HCT116 (cell line): ENCODE measurements at regions of chr1 and their contacts with region 1.

Region 1: DNA sequence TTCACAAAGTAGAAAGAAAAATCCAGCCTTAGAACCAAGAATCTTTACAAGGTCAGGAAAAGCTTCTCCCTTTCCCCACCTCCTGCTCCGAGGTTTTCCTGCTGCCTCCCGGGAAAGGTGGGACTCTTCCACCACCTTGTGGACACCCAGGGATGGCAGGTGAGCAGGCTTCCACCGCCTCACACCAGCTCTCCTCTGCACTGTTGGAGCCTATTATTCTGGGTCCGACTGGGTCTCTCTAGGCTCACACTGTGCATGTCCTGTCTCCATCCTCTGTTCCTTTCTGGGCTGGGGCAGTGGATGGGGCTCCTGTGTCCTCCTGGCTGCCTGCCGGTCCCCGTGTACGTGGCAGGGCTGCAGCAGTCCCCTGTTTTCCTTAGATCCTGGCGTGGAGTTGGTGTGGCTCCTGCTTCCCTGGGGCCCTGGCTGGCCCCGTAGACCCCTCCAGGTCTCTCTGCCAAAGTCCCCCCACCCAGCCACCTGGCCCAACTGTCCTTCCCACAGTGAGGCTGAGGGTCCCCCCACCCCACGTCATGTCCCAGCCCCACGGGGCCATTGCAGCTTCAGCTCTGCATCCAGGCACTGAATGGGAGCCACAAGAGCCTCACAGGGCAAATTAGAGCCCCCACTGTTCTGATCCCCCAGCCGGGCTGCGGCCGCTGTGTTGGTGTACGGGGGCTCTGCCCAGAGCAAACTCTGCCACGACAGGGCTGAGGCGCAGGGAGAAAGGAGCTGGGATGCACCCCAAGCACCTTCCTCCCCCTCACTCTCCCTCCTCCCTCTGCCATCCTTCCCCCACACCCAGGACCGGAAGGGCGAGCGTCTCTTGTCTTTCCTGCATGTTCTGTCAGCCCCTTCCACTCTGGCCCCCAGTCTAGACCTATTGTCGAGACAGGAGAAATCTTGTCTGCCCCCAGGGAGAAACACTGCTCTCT is 3.3 kb upstream of the SLC45A1 start:
- DNase-seq: peak; percentile 48
- ATAC-seq: peak; percentile 75
- H3K4me3 ChIP-seq: no peak overlapping the region
- H3K27ac ChIP-seq: peak overlapping the region; percentile 50; the same call in 1 of the 2 replicates
- H3K4me1 ChIP-seq: peaks cover 29 to 60% of the 10 kb centered on the region in 2 experiments
- H3K27me3 ChIP-seq: no peaks in the 10 kb centered on the region
- CTCF ChIP-seq: peak in 2 of 3 experiments; percentile 92 to 94; a peak in 4 of 6 replicates
- POLR2A ChIP-seq: no peak
- RAD21 ChIP-seq: no peak

Region 2: GRCh38 chr1:7667625-7668218 is 646.9 kb before region 1 on chr1:
- CTCF ChIA-PET with region 1: interaction called, 14 read pairs
- POLR2A ChIA-PET with region 1: no interaction called
- RAD21 ChIA-PET with region 1: no interaction called
- intact Hi-C with region 1: no loop called
- DNase-seq: peak; percentile 42
- ATAC-seq: peak; percentile 81
- H3K4me3 ChIP-seq: no peak overlapping the region
- H3K27ac ChIP-seq: no peak overlapping the region; the same call in 1 of the 2 replicates
- H3K4me1 ChIP-seq: peaks cover 0 to 8% of the 10 kb centered on the region in 2 experiments; a peak in 2 of 4 replicates
- H3K27me3 ChIP-seq: no peaks in the 10 kb centered on the region
- CTCF ChIP-seq: peak; percentile 99 to 100 (median 99)
- POLR2A ChIP-seq: no peak
- RAD21 ChIP-seq: peak; percentile 99

Region 3: DNA sequence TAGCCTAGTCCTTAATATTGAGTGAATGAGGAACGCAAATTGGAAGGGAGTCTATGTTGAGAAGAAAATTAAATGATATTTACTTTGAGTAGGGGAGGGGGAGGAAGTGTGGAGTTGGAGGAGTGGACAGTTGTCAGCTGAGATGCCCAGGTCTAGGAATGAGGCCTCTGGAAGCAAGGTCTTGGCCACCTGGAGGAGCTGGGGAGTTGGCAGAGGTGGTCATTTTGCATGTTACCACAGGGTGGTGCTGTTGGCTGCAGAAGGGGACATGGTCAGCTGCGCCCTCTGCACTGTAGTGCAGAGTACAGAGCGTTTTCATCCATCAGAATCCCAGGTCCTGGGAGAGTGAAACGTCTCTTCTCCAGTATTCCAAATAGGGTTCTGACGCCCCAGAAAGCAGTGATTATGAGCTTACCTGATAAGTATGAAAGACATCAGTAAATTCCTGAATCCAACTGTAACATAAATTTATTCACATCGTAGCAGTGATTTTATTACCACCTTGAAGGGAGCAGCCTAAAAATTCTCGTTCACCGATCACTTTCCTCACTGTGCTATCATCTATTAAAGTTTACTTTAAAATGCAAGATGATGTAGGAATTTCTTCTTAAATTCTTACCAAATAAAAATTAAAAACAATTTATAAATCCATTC is 339.3 kb before region 1 on chr1:
- CTCF ChIA-PET with region 1: interaction called, 62 read pairs
- POLR2A ChIA-PET with region 1: interaction called, 4 read pairs
- RAD21 ChIA-PET with region 1: interaction called, 9 to 15 read pairs
- intact Hi-C with region 1: loop called (anchors 1 kb)
- DNase-seq: peak; percentile 68
- ATAC-seq: peak; percentile 100
- H3K4me3 ChIP-seq: no peak overlapping the region
- H3K27ac ChIP-seq: no peak overlapping the region
- H3K4me1 ChIP-seq: peaks cover 0 to 3% of the 10 kb centered on the region in 2 experiments; a peak in 1 of 4 replicates
- H3K27me3 ChIP-seq: no peaks in the 10 kb centered on the region
- CTCF ChIP-seq: peak; percentile 95 to 99 (median 99)
- POLR2A ChIP-seq: no peak
- RAD21 ChIP-seq: peak; percentile 97

Region 4: GRCh38 chr1:7983086-7983778 is 331.4 kb before region 1 on chr1:
- CTCF ChIA-PET with region 1: interaction called, 10 read pairs
- POLR2A ChIA-PET with region 1: no interaction called
- RAD21 ChIA-PET with region 1: interaction called, 3 to 4 read pairs
- intact Hi-C with region 1: loop called (anchors 1 kb)
- DNase-seq: no peak
- ATAC-seq: no peak
- H3K4me3 ChIP-seq: no peak overlapping the region
- H3K27ac ChIP-seq: no peak overlapping the region
- H3K4me1 ChIP-seq: no peaks in the 10 kb centered on the region; a peak in 1 of 4 replicates
- H3K27me3 ChIP-seq: no peaks in the 10 kb centered on the region
- CTCF ChIP-seq: no peak
- POLR2A ChIP-seq: no peak
- RAD21 ChIP-seq: no peak

Region 5: DNA sequence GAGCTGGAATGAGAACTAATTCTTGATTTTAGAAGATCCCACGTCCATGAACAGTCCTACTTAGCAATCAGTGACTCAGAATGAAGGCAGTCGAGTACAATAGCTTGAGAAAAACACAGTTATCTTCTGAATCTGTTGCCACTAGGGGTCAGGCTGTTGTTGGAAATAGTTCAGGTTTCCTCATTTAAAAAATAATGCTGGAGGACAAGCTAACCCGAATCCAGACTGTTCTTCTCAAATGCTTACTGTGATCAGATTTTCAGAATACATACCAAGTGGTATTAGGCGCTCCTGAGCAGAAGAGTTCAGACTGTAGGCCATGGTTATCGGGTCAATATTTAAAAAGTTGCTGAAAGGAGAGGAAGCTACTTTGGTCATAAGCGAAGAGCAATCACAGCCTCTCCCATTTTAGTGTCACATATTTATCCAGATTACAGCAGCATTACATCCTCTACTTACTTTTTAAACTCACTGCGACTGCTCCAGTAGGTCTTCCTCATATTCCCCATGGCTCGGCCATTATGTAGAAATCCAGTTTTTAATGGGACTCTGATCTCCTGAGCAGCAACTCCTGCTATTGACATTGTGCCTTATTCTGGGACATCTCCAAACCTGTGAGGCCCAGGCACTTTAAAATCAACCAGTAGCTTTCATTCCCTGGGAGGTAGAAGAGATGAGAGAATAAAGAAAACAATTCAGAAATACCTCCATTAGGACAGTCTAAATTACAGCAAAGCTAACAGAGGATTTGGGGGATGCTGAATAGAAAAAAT is 299.4 kb before region 1 on chr1:
- CTCF ChIA-PET with region 1: interaction called, 23 read pairs
- POLR2A ChIA-PET with region 1: interaction called, 6 read pairs
- RAD21 ChIA-PET with region 1: interaction called in 1 of 2 experiments, 10 read pairs
- intact Hi-C with region 1: loop called (anchors 2 kb)
- DNase-seq: no peak
- ATAC-seq: peak; percentile 40
- H3K4me3 ChIP-seq: no peak overlapping the region
- H3K27ac ChIP-seq: peak overlapping the region; percentile 43
- H3K4me1 ChIP-seq: peaks cover 72 to 96% of the 10 kb centered on the region in 2 experiments
- H3K27me3 ChIP-seq: no peaks in the 10 kb centered on the region
- CTCF ChIP-seq: peak in 2 of 3 experiments; percentile 30 to 71; a peak in 3 of 6 replicates
- POLR2A ChIP-seq: no peak
- RAD21 ChIP-seq: no peak

Region 6: GRCh38 chr1:8026153-8026975 is 288.2 kb before region 1 on chr1 and contains the start of gene ERRFI1:
- CTCF ChIA-PET with region 1: interaction called, 22 read pairs
- POLR2A ChIA-PET with region 1: interaction called, 22 read pairs
- RAD21 ChIA-PET with region 1: interaction called in 1 of 2 experiments, 3 read pairs
- intact Hi-C with region 1: loop called (anchors 1 kb)
- DNase-seq: peak; percentile 83
- ATAC-seq: peak; percentile 74
- H3K4me3 ChIP-seq: peak within 1 kb of the TSS; percentile 88 to 93
- H3K27ac ChIP-seq: peak within 1 kb of the TSS; percentile 99
- H3K4me1 ChIP-seq: peaks cover 64 to 87% of the 10 kb centered on the region in 2 experiments
- H3K27me3 ChIP-seq: no peaks in the 10 kb centered on the region
- CTCF ChIP-seq: no peak
- POLR2A ChIP-seq: peak; percentile 96
- RAD21 ChIP-seq: no peak
- total RNA-seq, gene ERRFI1: 777 TPM

Region 7: GRCh38 chr1:8182034-8182761 is 132.4 kb before region 1 on chr1:
- CTCF ChIA-PET with region 1: interaction called, 4 read pairs
- POLR2A ChIA-PET with region 1: interaction called, 3 read pairs
- RAD21 ChIA-PET with region 1: interaction called, 3 read pairs
- intact Hi-C with region 1: loop called (anchors 5 kb)
- DNase-seq: peak; percentile 96
- ATAC-seq: peak; percentile 85
- H3K4me3 ChIP-seq: peak overlapping the region in 1 of 2 experiments; percentile 23; a peak in 2 of 4 replicates
- H3K27ac ChIP-seq: peak overlapping the region; percentile 97
- H3K4me1 ChIP-seq: peaks cover 41 to 59% of the 10 kb centered on the region in 2 experiments
- H3K27me3 ChIP-seq: no peaks in the 10 kb centered on the region
- CTCF ChIP-seq: no peak
- POLR2A ChIP-seq: no peak
- RAD21 ChIP-seq: no peak

Region 8: GRCh38 chr1:8283058-8283884 is 31.3 kb before region 1 on chr1:
- CTCF ChIA-PET with region 1: no interaction called
- POLR2A ChIA-PET with region 1: no interaction called
- RAD21 ChIA-PET with region 1: no interaction called
- intact Hi-C with region 1: no loop called
- DNase-seq: no peak
- ATAC-seq: no peak
- H3K4me3 ChIP-seq: no peak overlapping the region
- H3K27ac ChIP-seq: no peak overlapping the region
- H3K4me1 ChIP-seq: peaks cover 8 to 43% of the 10 kb centered on the region in 2 experiments; a peak in 3 of 4 replicates
- H3K27me3 ChIP-seq: no peaks in the 10 kb centered on the region
- CTCF ChIP-seq: no peak
- POLR2A ChIP-seq: no peak
- RAD21 ChIP-seq: no peak

Region 9: GRCh38 chr1:8396786-8397406 is 82.3 kb after region 1 on chr1:
- CTCF ChIA-PET with region 1: no interaction called
- POLR2A ChIA-PET with region 1: no interaction called
- RAD21 ChIA-PET with region 1: no interaction called
- intact Hi-C with region 1: no loop called
- DNase-seq: no peak
- ATAC-seq: peak; percentile 53
- H3K4me3 ChIP-seq: no peak overlapping the region
- H3K27ac ChIP-seq: no peak overlapping the region
- H3K4me1 ChIP-seq: peaks cover 3 to 23% of the 10 kb centered on the region in 2 experiments; a peak in 2 of 4 replicates
- H3K27me3 ChIP-seq: no peaks in the 10 kb centered on the region
- CTCF ChIP-seq: no peak
- POLR2A ChIP-seq: no peak
- RAD21 ChIP-seq: no peak

Region 10: GRCh38 chr1:8590526-8591351 is 276.1 kb after region 1 on chr1:
- CTCF ChIA-PET with region 1: no interaction called
- POLR2A ChIA-PET with region 1: no interaction called
- RAD21 ChIA-PET with region 1: no interaction called
- intact Hi-C with region 1: no loop called
- DNase-seq: no peak
- ATAC-seq: no peak
- H3K4me3 ChIP-seq: no peak overlapping the region
- H3K27ac ChIP-seq: no peak overlapping the region
- H3K4me1 ChIP-seq: no peaks in the 10 kb centered on the region
- H3K27me3 ChIP-seq: no peaks in the 10 kb centered on the region
- CTCF ChIP-seq: no peak
- POLR2A ChIP-seq: no peak
- RAD21 ChIP-seq: no peak